ENCODE measurements at regions of chr12 and their contacts with region 1.

Region 1: DNA sequence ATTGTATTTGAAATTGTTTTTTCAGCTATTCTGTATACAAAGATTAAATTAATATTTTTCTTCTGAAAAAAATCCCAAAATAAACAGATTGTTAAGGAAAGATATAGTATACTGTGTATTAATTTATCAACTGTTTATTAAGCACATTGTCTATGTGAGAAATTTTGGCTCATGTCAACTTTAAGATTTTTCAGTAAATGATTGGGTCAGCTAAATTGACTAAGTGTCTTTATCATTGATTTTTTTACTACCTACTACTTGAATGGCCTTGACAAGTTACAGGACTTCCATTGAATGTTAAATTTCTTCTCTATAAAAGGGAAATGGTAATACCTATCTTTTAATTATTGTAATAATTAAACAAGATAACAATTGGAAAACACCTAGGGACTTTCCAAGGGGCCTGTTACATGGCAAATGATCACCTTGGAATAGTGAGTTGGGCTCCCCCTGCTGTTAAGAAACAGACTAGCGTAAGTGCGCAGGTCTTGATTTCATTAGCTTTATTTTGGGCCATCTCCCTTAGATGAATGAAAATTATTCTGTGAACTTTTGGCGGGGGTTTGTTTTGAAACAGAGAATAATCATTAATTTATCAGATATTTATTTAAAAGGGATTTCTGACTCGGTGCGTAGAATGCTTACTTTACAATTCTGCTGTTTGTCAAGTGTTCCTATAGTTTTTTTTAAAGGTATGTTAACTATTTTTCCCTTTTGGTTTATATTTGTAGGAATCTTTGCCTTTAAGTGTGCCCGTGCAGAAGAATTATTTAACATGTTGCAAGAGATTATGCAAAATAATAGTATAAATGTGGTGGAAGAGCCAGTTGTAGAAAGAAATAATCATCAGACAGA is 14.5 kb upstream of the CCT2 start:
- DNase-seq: peak; percentile 59 to 76 (median 64)
- ATAC-seq: peak; percentile 96
- H3K4me3 ChIP-seq: no peak overlapping the region
- H3K27ac ChIP-seq: no peak overlapping the region
- H3K4me1 ChIP-seq: no peaks in the 10 kb centered on the region
- H3K27me3 ChIP-seq: no peaks in the 10 kb centered on the region
- CTCF ChIP-seq: peak; percentile 77 to 87 (median 77)
- EP300 ChIP-seq: no peak
- POLR2A ChIP-seq: no peak
- RAD21 ChIP-seq: peak; percentile 84

Region 2: GRCh38 chr12:69290545-69291277 is 280.1 kb before region 1 on chr12:
- CTCF ChIA-PET with region 1: interaction called, 25 read pairs
- POLR2A ChIA-PET with region 1: interaction called, 3 read pairs
- in situ Hi-C with region 1: loop called (anchors 5 kb)
- intact Hi-C with region 1: loop called (anchors 1 kb)
- DNase-seq: peak; percentile 76 to 91 (median 78)
- ATAC-seq: peak; percentile 100
- H3K4me3 ChIP-seq: no peak overlapping the region
- H3K27ac ChIP-seq: no peak overlapping the region
- H3K4me1 ChIP-seq: no peaks in the 10 kb centered on the region; a peak in 1 of 5 replicates
- H3K27me3 ChIP-seq: no peaks in the 10 kb centered on the region
- CTCF ChIP-seq: peak; percentile 99 to 100 (median 99)
- EP300 ChIP-seq: no peak
- POLR2A ChIP-seq: no peak
- RAD21 ChIP-seq: peak; percentile 98 to 99

Region 3: DNA sequence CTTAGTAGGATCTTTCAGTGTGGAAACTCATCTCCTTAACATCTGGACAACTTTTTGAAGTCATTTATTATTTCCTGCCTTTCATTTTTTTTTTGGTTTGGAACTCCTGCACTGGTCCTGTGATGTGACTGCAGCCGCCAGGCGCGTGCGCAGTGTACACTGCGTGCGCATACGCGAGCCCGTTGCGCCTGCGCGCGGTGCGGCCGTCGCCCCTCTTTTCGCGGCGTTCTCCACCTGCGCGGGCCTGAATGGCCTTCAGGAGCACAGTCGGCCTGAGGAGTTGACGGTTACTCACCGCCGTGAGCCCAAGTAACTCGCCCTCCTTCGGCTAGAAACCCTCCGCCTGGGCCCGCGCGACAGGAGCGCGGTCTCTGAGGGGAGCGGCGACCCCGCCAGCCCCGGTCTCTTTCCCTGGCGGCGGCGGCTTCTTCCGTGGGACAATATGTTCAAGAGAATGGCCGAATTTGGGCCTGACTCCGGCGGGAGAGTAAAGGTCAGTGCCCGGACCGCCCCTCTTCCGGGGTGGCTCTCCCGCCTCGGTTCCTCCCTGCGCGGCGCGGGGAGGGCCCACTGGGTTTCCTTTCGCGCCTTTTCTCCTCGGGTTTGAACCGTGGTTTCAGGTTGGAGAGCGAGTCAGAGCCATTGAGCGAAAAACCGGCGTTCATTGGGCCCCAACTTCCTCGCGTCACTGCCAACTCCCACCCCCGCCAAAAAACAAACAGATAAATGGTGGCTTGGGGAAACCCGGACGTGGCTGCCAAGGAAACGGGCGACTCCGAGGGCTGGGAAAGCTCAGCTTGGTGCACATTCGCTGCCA is 211.0 kb before region 1 on chr12 and contains the start of gene YEATS4:
- CTCF ChIA-PET with region 1: no interaction called
- POLR2A ChIA-PET with region 1: interaction called, 3 read pairs
- in situ Hi-C with region 1: loop called (anchors 10 kb)
- intact Hi-C with region 1: loop called (anchors 1 kb)
- DNase-seq: peak; percentile 86 to 95 (median 90)
- ATAC-seq: peak; percentile 94
- H3K4me3 ChIP-seq: peak within 1 kb of the TSS; percentile 52
- H3K27ac ChIP-seq: peak within 1 kb of the TSS; percentile 95
- H3K4me1 ChIP-seq: peaks cover 11 to 14% of the 10 kb centered on the region in 2 experiments; a peak in 4 of 5 replicates
- H3K27me3 ChIP-seq: no peaks in the 10 kb centered on the region
- CTCF ChIP-seq: no peak
- EP300 ChIP-seq: peak; percentile 34; the same call in 1 of the 2 replicates
- POLR2A ChIP-seq: peak; percentile 95
- RAD21 ChIP-seq: no peak
- polyA plus RNA-seq, gene YEATS4: 25.9 to 26.3 TPM

Region 4: DNA sequence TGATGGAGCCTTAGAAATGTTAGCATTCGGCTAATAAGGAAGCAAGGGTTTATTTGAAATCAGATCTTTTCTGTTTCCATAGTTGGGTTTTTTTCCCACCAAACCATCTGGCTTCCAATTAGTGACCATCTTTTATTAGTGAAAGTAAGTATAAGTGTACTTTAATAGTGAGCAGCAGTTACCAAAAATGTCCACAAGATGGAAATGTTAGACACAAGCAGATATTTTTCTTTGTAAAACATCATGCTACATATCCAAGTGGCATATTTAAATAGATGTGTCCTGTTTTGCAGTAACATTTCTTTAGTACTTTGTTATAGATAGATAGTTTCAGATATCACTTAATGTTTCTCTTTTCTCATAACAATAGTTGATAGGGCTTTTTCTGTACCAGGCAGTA is 182.4 kb before region 1 on chr12:
- CTCF ChIA-PET with region 1: interaction called, 11 read pairs
- POLR2A ChIA-PET with region 1: no interaction called
- in situ Hi-C with region 1: no loop called
- intact Hi-C with region 1: no loop called
- DNase-seq: peak in 1 of 4 experiments; percentile 15
- ATAC-seq: peak; percentile 58; the same call in 1 of the 3 replicates
- H3K4me3 ChIP-seq: no peak overlapping the region
- H3K27ac ChIP-seq: no peak overlapping the region
- H3K4me1 ChIP-seq: no peaks in the 10 kb centered on the region; a peak in 1 of 5 replicates
- H3K27me3 ChIP-seq: no peaks in the 10 kb centered on the region
- CTCF ChIP-seq: peak in 2 of 3 experiments; percentile 7 to 55; a peak in 3 of 6 replicates
- EP300 ChIP-seq: no peak
- POLR2A ChIP-seq: no peak
- RAD21 ChIP-seq: peak; percentile 46 to 54

Region 5: GRCh38 chr12:69415471-69416275 is 155.1 kb before region 1 on chr12:
- CTCF ChIA-PET with region 1: interaction called, 12 read pairs
- POLR2A ChIA-PET with region 1: no interaction called
- in situ Hi-C with region 1: no loop called
- intact Hi-C with region 1: loop called (anchors 1 kb)
- DNase-seq: peak in 3 of 4 experiments; percentile 28 to 55 (median 43)
- ATAC-seq: peak; percentile 93
- H3K4me3 ChIP-seq: no peak overlapping the region
- H3K27ac ChIP-seq: no peak overlapping the region
- H3K4me1 ChIP-seq: peaks cover 3 to 8% of the 10 kb centered on the region in 2 experiments; a peak in 3 of 5 replicates
- H3K27me3 ChIP-seq: no peaks in the 10 kb centered on the region
- CTCF ChIP-seq: peak; percentile 69 to 76 (median 70)
- EP300 ChIP-seq: no peak
- POLR2A ChIP-seq: no peak
- RAD21 ChIP-seq: peak; percentile 63 to 77

Region 6: DNA sequence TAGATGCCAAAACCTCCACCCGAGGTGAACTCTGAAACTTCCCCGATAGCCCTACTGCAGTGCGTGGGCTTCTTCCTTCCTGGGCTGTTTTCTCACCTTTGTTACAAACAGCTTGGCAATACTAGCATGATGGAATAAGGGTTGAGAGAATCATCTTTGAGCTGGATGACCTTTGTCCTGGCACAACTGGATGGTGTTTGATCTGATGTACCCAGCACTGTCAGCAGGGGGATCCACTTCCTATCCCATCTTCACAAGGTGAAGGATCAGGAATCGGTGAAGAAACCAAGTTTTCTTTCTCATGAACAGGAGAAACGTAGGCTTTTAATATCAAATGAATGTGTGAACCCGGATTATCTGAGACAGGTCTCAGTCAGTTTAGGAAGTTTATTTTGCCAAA is 59.4 kb after region 1 on chr12:
- CTCF ChIA-PET with region 1: no interaction called
- POLR2A ChIA-PET with region 1: no interaction called
- in situ Hi-C with region 1: no loop called
- intact Hi-C with region 1: no loop called
- DNase-seq: peak in 3 of 4 experiments; percentile 20 to 39 (median 34)
- ATAC-seq: peak; percentile 72
- H3K4me3 ChIP-seq: no peak overlapping the region
- H3K27ac ChIP-seq: no peak overlapping the region
- H3K4me1 ChIP-seq: peaks cover 4% of the 10 kb centered on the region in 2 experiments; a peak in 3 of 5 replicates
- H3K27me3 ChIP-seq: 0 out of 5 replicates have a peak, but pooled peaks cover 0 to 6% of the 10 kb centered on the region in 2 experiments
- CTCF ChIP-seq: peak; percentile 49 to 56 (median 54); a peak in 4 of 6 replicates
- EP300 ChIP-seq: no peak
- POLR2A ChIP-seq: no peak
- RAD21 ChIP-seq: peak in 1 of 2 experiments; percentile 47; a peak in 2 of 4 replicates

Region 7: DNA sequence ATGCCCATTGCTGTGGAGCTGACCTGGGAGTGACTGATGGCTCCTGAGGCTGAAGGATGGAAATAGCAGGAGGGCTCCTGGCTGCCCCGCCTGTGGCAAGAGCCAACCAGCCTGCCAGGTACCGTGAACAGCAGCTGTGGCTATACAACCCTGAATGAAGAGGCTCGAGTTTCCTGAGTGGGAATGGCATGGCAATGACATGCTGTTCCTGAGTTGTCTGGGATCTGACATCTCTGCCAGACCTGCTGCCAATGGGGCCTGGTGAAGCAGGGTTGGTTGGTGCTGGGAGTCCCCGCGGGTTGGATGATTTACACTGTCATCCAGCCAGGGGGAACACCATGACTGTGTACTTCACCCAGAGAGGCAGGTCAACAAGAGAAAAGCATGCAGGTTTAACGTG is 71.8 kb after region 1 on chr12:
- CTCF ChIA-PET with region 1: no interaction called
- POLR2A ChIA-PET with region 1: no interaction called
- in situ Hi-C with region 1: no loop called
- intact Hi-C with region 1: no loop called
- DNase-seq: no peak
- ATAC-seq: peak; percentile 32; the same call in 2 of the 3 replicates
- H3K4me3 ChIP-seq: no peak overlapping the region
- H3K27ac ChIP-seq: no peak overlapping the region
- H3K4me1 ChIP-seq: peaks cover 0 to 4% of the 10 kb centered on the region in 2 experiments; a peak in 2 of 5 replicates
- H3K27me3 ChIP-seq: no peaks in the 10 kb centered on the region
- CTCF ChIP-seq: no peak
- EP300 ChIP-seq: no peak
- POLR2A ChIP-seq: no peak
- RAD21 ChIP-seq: no peak